ENCODE measurements at regions of chr21 and their contacts with region 1.

Region 1: GRCh38 chr21:37366482-37367316 is at the start of gene DYRK1A:
- DNase-seq: peak; percentile 97 to 100 (median 98)
- ATAC-seq: peak; percentile 82
- H3K4me3 ChIP-seq: peak within 1 kb of the TSS; percentile 83
- H3K4me3 Mint-ChIP-seq: peak within 1 kb of the TSS; percentile 100
- H3K27ac ChIP-seq: peak within 1 kb of the TSS; percentile 92 to 99
- H3K27ac Mint-ChIP-seq: peak within 1 kb of the TSS; percentile 99
- H3K4me1 ChIP-seq: peaks cover 17% of the 10 kb centered on the region
- H3K4me1 Mint-ChIP-seq: peaks cover 53% of the 10 kb centered on the region
- H3K27me3 ChIP-seq: no peaks in the 10 kb centered on the region
- H3K27me3 Mint-ChIP-seq: no peaks in the 10 kb centered on the region
- CTCF ChIP-seq: no peak
- total RNA-seq, gene DYRK1A: 135 to 145 TPM

Region 2: GRCh38 chr21:36060159-36060921 is 1306.4 kb before region 1 on chr21 and contains the start of gene SETD4:
- CTCF ChIA-PET with region 1: no interaction called
- POLR2A ChIA-PET with region 1: no interaction called
- intact Hi-C with region 1: loop called in 1 of 2 experiments (anchors 10 kb)
- DNase-seq: peak; percentile 85 to 96 (median 91)
- ATAC-seq: peak; percentile 86
- H3K4me3 ChIP-seq: peak within 1 kb of the TSS; percentile 85
- H3K4me3 Mint-ChIP-seq: peak within 1 kb of the TSS; percentile 96
- H3K27ac ChIP-seq: peak within 1 kb of the TSS; percentile 89 to 93
- H3K27ac Mint-ChIP-seq: peak within 1 kb of the TSS; percentile 97
- H3K4me1 ChIP-seq: peaks cover 20% of the 10 kb centered on the region
- H3K4me1 Mint-ChIP-seq: peaks cover 21% of the 10 kb centered on the region
- H3K27me3 ChIP-seq: no peaks in the 10 kb centered on the region
- H3K27me3 Mint-ChIP-seq: no peaks in the 10 kb centered on the region
- CTCF ChIP-seq: no peak
- total RNA-seq, gene SETD4: 10.8 to 12.3 TPM

Region 3: DNA sequence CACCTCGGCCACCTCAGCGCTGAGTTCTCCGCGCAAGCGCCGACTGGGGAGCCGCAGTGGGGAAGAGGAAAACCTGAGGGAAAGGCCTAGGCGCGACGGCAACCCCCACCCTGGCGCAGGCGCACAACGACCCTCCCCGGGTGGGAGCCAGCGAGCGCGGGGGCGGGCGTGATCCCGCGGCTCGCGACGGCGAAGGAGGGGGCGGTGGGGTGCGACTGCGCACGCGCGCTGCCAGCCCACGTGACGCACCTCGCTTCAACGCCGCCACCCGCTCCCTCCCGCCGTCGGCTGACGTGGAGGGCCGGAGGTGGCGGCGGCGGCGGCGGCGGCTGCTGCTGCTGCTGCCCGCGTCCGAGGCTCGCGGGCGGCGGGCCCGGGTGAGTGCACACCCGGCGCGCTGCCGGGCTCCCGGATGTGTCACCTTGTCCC is 293.7 kb before region 1 on chr21 and contains the starts of genes PIGP and TTC3:
- CTCF ChIA-PET with region 1: no interaction called
- POLR2A ChIA-PET with region 1: no interaction called
- intact Hi-C with region 1: loop called in 1 of 2 experiments (anchors 2 kb)
- DNase-seq: peak; percentile 92 to 99 (median 95)
- ATAC-seq: peak; percentile 64
- H3K4me3 ChIP-seq: peak within 1 kb of the TSS; percentile 88
- H3K4me3 Mint-ChIP-seq: peak within 1 kb of the TSS; percentile 98
- H3K27ac ChIP-seq: peak within 1 kb of the TSS; percentile 93
- H3K27ac Mint-ChIP-seq: peak within 1 kb of the TSS; percentile 94
- H3K4me1 ChIP-seq: peaks cover 22% of the 10 kb centered on the region
- H3K4me1 Mint-ChIP-seq: peaks cover 60% of the 10 kb centered on the region
- H3K27me3 ChIP-seq: no peaks in the 10 kb centered on the region
- H3K27me3 Mint-ChIP-seq: no peaks in the 10 kb centered on the region
- CTCF ChIP-seq: no peak
- total RNA-seq, gene PIGP: 11.1 to 14.8 TPM
- total RNA-seq, gene TTC3: 141 to 142 TPM

Region 4: DNA sequence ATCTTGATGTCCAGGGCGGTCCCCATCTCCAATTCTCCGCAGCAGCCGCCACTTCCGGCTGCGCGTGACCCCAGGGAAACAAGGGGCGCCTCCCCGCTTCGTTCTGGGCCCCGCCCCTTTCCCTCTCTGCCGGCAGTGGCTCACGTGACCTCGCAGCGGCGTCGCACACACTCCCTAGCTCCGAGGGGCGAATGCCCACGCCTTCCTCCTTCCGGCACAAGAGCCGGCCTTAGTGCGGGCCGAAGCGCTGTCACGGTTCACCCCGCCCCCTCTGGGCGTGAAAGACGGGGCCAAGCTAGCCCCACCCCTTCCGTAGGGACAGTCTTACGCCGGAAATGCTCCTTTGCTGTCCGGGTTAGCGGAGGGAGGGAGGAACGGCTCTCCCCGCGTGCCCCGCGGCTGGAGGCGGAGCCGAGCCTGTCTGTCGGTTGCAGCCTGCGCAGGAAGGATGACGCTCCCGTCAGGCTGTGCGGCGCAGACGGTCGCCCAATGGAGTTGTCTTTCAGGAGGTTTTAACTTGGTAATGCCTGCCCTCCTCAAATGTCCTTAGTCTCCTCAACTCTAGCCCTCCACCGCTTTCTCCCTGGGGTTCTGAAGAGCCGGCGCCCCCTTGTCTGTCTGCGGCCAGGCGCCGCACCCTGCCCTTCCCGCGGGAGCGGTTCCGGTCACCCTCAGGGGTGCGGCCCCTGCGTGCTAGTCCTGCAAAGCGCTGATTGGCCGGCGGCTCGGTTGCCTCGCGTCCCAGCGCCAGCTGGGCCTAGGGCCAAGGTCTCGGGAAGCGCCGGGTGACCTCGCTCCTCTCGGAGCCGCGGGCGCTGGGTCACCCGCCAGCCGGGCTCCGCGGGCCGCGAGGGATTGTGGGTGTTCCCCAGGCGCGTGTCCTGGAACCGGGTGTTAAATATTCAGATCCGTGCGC is 99.2 kb before region 1 on chr21 and contains the start of gene VPS26C:
- CTCF ChIA-PET with region 1: no interaction called
- POLR2A ChIA-PET with region 1: interaction called, 82 read pairs
- intact Hi-C with region 1: loop called (anchors 1 kb)
- DNase-seq: peak; percentile 94 to 100 (median 96)
- ATAC-seq: peak; percentile 84
- H3K4me3 ChIP-seq: peak within 1 kb of the TSS; percentile 90
- H3K4me3 Mint-ChIP-seq: peak within 1 kb of the TSS; percentile 93
- H3K27ac ChIP-seq: peak within 1 kb of the TSS; percentile 96 to 98
- H3K27ac Mint-ChIP-seq: peak within 1 kb of the TSS; percentile 97
- H3K4me1 ChIP-seq: peaks cover 19% of the 10 kb centered on the region
- H3K4me1 Mint-ChIP-seq: peaks cover 56% of the 10 kb centered on the region
- H3K27me3 ChIP-seq: no peaks in the 10 kb centered on the region
- H3K27me3 Mint-ChIP-seq: no peaks in the 10 kb centered on the region
- CTCF ChIP-seq: no peak
- total RNA-seq, gene VPS26C: 31.8 to 36.0 TPM

Region 5: DNA sequence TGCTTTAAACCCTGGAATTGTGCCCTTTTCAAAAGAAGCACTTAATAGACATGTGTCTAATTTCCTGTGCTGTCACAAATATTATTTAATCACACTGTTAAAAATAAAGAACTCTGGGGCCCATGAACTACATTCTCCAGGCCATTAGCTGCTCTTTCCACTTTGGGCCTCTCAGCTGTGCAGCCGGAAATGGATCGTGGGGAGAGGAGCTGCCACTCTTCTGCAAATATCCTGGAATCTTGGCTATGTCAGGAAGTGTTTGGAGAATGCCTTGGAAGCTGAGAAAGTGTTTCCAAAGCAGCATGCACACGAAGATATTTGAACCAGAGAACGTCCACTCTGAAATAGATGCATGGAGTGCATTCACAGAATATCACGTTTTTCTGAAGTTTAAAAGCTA is 72.0 kb before region 1 on chr21:
- CTCF ChIA-PET with region 1: no interaction called
- POLR2A ChIA-PET with region 1: no interaction called
- intact Hi-C with region 1: no loop called
- DNase-seq: no peak
- ATAC-seq: no peak
- H3K4me3 ChIP-seq: no peak overlapping the region
- H3K4me3 Mint-ChIP-seq: no peak overlapping the region
- H3K27ac ChIP-seq: no peak overlapping the region
- H3K27ac Mint-ChIP-seq: no peak overlapping the region
- H3K4me1 ChIP-seq: no peaks in the 10 kb centered on the region
- H3K4me1 Mint-ChIP-seq: peaks cover 7% of the 10 kb centered on the region
- H3K27me3 ChIP-seq: peaks cover 0 to 6% of the 10 kb centered on the region in 2 experiments
- H3K27me3 Mint-ChIP-seq: peaks cover 4% of the 10 kb centered on the region
- CTCF ChIP-seq: no peak

Region 6: GRCh38 chr21:37435120-37435519 is 68.4 kb after region 1 on chr21:
- CTCF ChIA-PET with region 1: no interaction called
- POLR2A ChIA-PET with region 1: interaction called, 3 read pairs
- intact Hi-C with region 1: loop called in 1 of 2 experiments (anchors 2 kb)
- DNase-seq: peak in 9 of 14 experiments; percentile 12 to 85 (median 45)
- ATAC-seq: peak; percentile 99
- H3K4me3 ChIP-seq: no peak overlapping the region
- H3K4me3 Mint-ChIP-seq: no peak overlapping the region
- H3K27ac ChIP-seq: no peak overlapping the region
- H3K27ac Mint-ChIP-seq: no peak overlapping the region
- H3K4me1 ChIP-seq: peaks cover 23% of the 10 kb centered on the region
- H3K4me1 Mint-ChIP-seq: peaks cover 39% of the 10 kb centered on the region
- H3K27me3 ChIP-seq: no peaks in the 10 kb centered on the region
- H3K27me3 Mint-ChIP-seq: no peaks in the 10 kb centered on the region
- CTCF ChIP-seq: no peak

Region 7: DNA sequence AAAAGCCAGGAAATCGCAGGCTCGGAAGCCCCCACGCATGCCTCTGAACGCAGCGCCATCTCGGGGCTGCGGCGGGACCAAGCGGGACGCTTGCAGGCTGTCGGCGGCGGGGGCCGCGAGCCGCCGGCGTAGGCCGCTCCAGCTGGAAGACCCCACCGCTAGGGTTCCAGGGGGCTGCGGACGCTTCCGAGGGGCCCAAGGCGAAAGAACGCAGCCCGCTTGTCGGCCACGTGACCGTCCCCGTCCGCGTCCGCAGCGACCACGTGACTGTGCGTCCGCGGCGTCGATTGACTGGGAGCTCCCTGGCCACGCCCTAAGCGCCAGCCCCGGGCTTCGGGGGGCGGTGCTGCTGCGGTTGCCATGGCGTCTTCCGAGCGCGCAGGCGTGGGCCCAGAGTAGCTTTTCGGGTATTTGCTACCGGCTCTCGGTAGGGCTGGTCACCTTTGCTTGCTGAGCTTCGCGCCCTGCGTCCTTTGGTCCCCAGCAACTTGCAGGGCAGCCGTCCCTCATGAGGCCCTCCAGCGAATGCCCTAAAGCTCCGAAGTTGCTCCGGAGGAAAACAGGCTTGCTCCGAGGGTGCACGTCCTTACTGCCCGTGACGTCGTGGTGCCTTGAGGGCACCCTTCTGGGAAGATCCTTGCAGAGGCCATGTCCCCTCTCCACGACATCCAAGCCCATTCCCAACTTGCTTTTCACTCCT is 197.1 kb after region 1 on chr21:
- CTCF ChIA-PET with region 1: interaction called, 4 read pairs
- POLR2A ChIA-PET with region 1: interaction called, 29 read pairs
- intact Hi-C with region 1: loop called (anchors 2 kb)
- DNase-seq: peak; percentile 76 to 97 (median 90)
- ATAC-seq: peak; percentile 77
- H3K4me3 ChIP-seq: peak overlapping the region; percentile 96
- H3K4me3 Mint-ChIP-seq: peak overlapping the region; percentile 95
- H3K27ac ChIP-seq: peak overlapping the region; percentile 88 to 97
- H3K27ac Mint-ChIP-seq: peak overlapping the region; percentile 98
- H3K4me1 ChIP-seq: peaks cover 28% of the 10 kb centered on the region
- H3K4me1 Mint-ChIP-seq: peaks cover 22% of the 10 kb centered on the region
- H3K27me3 ChIP-seq: no peaks in the 10 kb centered on the region
- H3K27me3 Mint-ChIP-seq: no peaks in the 10 kb centered on the region
- CTCF ChIP-seq: peak; percentile 50